Activated T-helper 2 cell treated with anti-CD3 and anti-CD28 coated beads, Interferon-gamma antibody, Interleukin-2, Interleukin-4, amounts not matched to agents 10 μg/mL and 5 μg/mL and 100 μg/mL, durations not matched to agents 14 hours and 24 hours and 36 hours (primary cell): ENCODE measurements at regions of chr2 and their contacts with region 1.

Region 1: DNA sequence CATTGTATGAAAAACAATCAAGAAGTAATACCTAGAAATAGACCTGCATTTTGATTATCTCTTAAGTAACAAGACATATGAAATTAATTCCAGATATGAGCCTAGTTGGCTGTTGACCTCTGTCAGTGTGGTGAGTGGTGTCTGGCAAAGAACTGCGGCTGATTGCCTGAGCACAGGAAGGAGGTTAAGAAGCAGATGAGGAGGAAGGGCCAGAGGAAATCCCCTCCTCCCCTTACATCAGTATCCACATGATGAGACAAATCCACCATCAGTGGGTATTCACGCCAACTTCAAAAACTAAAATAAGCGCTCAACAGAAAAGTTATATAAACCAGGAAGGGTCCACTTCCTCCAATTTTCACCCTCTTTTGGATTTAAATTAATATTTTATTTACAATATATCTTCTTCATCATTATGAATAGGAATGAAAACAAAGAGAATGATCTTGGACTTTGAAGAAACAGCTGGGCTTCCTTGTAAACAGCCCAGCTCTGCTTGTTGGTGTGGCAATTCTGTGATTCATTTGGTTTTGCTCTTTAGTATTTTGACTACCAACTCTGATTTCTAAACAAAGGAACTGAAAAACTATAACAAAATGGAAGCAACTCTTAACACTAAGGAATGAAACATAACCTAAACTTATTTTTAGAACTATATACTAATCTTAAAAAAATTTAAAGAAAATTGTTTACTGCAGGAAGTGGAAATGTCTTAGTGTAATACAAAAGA is 27.3 kb downstream of the RFTN2 start:
- DNase-seq: no peak
- H3K4me3 Mint-ChIP-seq: no peak overlapping the region
- H3K27ac Mint-ChIP-seq: no peak overlapping the region
- H3K4me1 Mint-ChIP-seq: no peaks in the 10 kb centered on the region
- H3K27me3 Mint-ChIP-seq: peaks cover 18% of the 10 kb centered on the region

Region 2: DNA sequence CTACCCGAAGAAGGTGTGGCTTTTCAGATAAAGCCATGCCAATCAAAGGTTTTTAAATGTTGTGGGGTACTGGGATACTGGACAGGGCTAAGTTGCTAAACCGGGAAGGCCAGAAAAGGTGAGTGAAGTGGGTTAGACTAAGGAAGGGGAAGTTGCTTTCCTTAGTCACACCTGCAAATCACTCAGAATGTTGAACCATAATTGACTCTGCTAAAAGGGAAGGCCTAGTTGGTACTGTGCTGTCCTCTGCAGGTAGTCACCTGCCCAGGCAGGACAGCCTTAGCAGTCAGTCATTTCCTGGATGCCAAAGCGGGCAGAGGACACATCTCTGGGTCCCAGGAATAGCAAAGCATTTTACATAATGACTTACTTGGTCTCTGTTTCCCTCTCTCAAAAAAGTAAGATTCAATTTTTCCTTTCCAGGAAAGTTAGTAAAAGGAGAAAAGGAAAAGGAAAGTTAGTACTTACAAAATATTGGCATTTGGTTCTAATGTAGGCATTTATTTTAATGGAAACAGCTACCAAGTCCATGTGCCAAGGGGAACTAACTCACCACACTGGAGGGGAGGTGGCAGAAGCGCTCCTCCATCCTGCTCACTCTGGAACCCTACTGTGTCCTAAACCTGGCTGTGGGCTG is 33.0 kb before region 1 on chr2:
- intact Hi-C with region 1: no loop called
- DNase-seq: no peak
- H3K4me3 Mint-ChIP-seq: no peak overlapping the region
- H3K27ac Mint-ChIP-seq: no peak overlapping the region
- H3K4me1 Mint-ChIP-seq: no peaks in the 10 kb centered on the region
- H3K27me3 Mint-ChIP-seq: peaks cover 8% of the 10 kb centered on the region

Region 3: DNA sequence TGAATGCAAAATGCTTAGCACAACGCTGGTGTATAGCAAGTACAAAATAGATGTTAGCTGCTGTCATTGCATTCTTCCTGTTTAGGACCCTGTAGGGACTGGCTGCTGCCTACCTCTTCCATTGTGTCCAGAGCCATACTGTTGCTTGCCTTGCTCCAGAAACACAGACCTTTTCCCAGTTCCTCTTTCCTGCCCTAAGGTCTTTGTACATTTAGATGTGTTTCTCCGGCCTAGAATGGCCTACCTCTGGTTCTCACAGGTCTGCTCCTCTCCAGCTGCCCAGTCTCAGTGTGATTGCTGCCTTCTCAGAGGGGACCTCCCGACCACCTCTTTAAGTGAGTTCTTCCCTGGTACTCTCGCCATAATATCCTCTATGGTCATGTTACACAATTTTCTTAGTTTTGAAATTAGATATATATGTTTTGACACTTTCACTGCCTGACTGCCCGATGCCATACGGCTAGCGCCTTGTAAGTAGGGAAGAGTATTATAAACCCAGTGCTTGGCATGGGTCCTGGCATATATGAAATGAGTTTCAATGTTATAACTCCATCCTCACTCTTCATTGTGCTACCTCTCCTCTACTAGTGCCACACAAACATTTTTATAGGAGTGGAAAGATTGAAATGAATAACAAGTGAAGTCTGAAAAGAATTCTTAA is 21.0 kb before region 1 on chr2:
- intact Hi-C with region 1: loop called (anchors 2 kb)
- DNase-seq: no peak
- H3K4me3 Mint-ChIP-seq: no peak overlapping the region
- H3K27ac Mint-ChIP-seq: no peak overlapping the region
- H3K4me1 Mint-ChIP-seq: no peaks in the 10 kb centered on the region
- H3K27me3 Mint-ChIP-seq: no peaks in the 10 kb centered on the region